Activated CD4-positive, alpha-beta memory T cell treated with anti-CD3 and anti-CD28 coated beads, Interleukin-2, amount 10 ng/mL, durations not matched to agents 7 days and 5 days (primary cell): ENCODE measurements at regions of chr16 and their contacts with region 1.

Region 1: GRCh38 chr16:89922884-89923690 is at the start of gene TUBB3:
- DNase-seq: peak; percentile 75
- H3K4me3 Mint-ChIP-seq: peak within 1 kb of the TSS; percentile 75
- H3K27ac Mint-ChIP-seq: peak within 1 kb of the TSS; percentile 70
- H3K4me1 Mint-ChIP-seq: peaks cover 52% of the 10 kb centered on the region
- H3K27me3 Mint-ChIP-seq: peaks cover 43% of the 10 kb centered on the region
- total RNA-seq, gene TUBB3: 3.6 to 4.0 TPM

Region 2: GRCh38 chr16:89909777-89910716 is 13.0 kb before region 1 on chr16:
- CTCF ChIA-PET with region 1: interaction called, 11 read pairs
- POLR2A ChIA-PET with region 1: interaction called, 8 read pairs
- DNase-seq: peak; percentile 77
- H3K4me3 Mint-ChIP-seq: no peak overlapping the region
- H3K27ac Mint-ChIP-seq: no peak overlapping the region
- H3K4me1 Mint-ChIP-seq: peaks cover 10% of the 10 kb centered on the region
- H3K27me3 Mint-ChIP-seq: no peaks in the 10 kb centered on the region

Region 3: GRCh38 chr16:89972244-89973234 is 49.5 kb after region 1 on chr16:
- CTCF ChIA-PET with region 1: no interaction called
- POLR2A ChIA-PET with region 1: interaction called, 14 read pairs
- DNase-seq: peak; percentile 92
- H3K4me3 Mint-ChIP-seq: peak overlapping the region; percentile 99
- H3K27ac Mint-ChIP-seq: peak overlapping the region; percentile 95
- H3K4me1 Mint-ChIP-seq: peaks cover 36% of the 10 kb centered on the region
- H3K27me3 Mint-ChIP-seq: no peaks in the 10 kb centered on the region